ENCODE measurements at regions of chr4 and their contacts with region 1.

Region 1: DNA sequence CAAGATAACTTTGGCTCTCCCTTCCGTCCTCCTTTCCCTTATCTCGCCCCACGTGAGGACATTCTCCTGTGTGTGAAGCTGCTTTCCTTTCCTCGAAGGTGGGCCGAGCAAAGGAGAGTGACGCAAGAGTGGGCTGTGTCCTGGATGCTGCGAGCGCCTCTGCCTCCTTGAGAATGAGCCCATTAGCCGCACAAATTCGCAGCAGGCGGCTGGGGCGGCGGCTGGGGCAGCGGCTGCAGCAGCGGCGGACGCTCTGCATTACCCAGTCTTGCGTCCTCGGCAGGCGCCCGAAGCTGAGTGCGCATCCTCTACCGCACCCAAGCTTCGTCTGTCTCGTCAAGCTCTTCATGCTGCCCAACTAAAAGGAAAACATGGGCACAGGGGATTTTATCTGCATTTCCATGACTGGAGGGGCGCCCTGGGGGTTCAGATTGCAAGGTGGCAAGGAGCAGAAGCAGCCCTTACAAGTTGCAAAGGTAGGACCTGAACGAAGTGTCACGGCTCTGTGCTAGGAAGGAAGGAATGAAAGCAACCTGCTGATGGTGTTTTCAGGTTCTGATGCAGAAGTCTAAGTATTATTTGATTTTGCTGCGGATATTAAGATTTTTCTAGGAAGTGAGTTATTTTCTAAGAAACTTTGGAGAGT is at the start of gene SYNPO2:
- DNase-seq: peak; percentile 90
- total RNA-seq, gene SYNPO2: 316 TPM

Region 2: GRCh38 chr4:118740869-118741268 is 147.9 kb before region 1 on chr4:
- intact Hi-C with region 1: loop called (anchors 2 kb)
- DNase-seq: no peak

Region 3: DNA sequence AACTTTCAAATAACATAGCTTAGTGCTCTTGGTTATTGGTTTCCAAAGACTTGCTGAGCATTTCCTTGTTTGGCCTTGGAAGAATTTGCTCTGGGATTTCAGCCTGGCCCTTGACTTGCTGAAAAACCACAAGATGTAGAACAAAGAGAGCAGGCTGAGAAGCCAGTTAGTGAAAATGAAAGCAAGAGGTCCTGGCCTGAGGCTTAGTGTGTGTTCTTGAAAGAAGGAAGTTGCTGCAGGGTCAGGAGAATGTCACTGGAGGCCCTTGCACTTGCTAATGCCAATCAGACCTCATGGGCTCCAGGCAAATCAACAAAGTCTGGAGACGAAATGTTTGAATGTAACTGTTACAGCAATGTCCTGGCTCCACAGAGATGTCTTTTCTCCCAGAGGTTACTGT is 79.2 kb after region 1 on chr4:
- intact Hi-C with region 1: loop called (anchors 1 kb)
- DNase-seq: no peak

Measured in cardiac septum (tissue), 1 donor.